ENCODE measurements at regions of chr14 and their contacts with region 1.

Region 1: DNA sequence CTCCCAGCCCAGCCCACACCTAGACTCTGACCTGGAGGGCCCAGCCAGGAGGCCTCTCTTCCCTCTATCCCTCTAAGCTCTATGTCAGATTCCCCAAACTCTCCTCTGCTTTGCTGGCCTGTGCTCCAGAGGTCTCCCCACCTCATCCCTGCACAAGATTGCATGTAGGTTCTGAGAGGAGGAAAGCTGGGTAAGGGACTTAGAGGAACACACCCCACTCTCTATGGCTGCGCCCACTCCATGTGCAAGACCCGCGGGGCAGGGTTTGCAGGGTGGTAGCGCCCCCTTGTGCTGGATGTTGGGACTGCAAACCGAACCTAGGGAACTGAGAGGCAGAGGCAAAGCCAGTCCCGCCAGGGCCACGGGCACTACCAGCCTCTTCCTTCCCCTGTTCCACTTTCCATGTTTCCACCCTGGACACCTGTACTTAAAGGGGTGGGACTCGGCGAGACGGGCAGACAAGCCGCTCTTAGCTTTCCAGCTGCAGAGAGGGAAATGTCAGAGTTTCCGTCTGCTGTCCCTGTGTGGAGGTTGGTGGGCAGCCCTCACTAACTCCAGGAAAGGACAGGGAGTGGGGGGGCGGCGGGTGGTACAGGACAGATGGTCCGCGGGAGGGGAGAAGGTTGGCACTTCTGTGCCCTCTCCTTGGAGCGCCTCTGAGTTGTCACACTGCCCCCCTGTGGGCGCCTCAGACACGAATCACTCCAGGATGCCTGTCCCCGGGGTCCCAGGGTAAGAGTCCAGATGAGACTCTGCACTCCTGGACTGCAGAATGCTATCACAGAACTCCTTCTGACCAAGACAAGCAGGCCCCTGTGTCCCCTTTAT is 16.8 kb downstream of the MMP14 start:
- DNase-seq: peak; percentile 93
- H3K4me3 ChIP-seq: peak overlapping the region; percentile 43
- H3K27ac ChIP-seq: peak overlapping the region; percentile 72
- H3K4me1 ChIP-seq: peaks cover 18% of the 10 kb centered on the region
- H3K27me3 ChIP-seq: no peaks in the 10 kb centered on the region
- CTCF ChIP-seq: peak; percentile 92

Region 2: GRCh38 chr14:22303589-22304195 is 549.5 kb before region 1 on chr14:
- CTCF ChIA-PET with region 1: no interaction called
- POLR2A ChIA-PET with region 1: no interaction called
- intact Hi-C with region 1: loop called (anchors 10 kb)
- DNase-seq: peak; percentile 63
- H3K4me3 ChIP-seq: peak overlapping the region; percentile 15
- H3K27ac ChIP-seq: peak overlapping the region; percentile 78
- H3K4me1 ChIP-seq: peaks cover 29% of the 10 kb centered on the region
- H3K27me3 ChIP-seq: no peaks in the 10 kb centered on the region
- CTCF ChIP-seq: peak; percentile 74

Region 3: DNA sequence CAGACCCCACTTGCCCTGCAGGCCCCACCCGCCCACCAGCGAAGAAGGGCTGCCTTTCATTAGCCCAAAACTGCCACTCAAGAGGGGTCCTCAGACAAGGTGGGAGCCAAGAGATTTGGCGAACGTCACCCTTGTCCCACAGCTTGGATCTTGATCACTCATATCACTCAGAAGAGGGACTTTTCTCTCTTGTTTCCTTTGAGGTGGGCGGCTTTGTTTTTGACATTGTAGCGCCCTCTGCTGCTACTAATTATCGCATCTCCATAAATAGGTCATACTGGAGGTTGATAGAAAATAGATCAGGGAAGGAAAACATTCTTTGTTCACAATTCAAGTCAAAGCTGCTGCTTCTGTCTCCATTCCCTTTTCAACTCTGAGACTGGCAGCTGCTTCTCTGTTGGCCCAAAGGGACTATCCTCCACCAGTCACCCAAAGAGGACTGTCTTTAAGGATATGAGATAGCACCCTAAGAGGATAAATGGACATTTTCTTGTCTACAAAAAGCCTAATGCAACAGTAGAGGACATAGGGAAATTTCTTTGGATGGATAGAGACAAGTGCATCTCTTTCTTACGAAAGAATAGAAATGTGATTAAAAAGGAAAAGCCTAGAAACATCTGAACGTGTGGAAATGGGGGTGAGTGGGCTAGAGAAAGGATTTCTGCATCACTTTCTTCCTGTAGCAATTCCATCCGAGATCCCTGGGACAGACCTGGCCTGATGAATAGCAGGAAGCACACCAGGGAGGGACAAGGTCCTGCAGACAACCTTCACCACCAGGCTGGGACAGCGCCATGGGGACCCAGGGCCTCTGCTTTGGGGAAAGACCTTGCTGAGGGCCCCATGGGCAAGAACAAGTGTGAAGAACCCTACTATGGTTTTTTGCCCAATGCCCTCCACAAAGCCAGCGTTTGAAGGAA is 380.0 kb before region 1 on chr14:
- CTCF ChIA-PET with region 1: no interaction called
- POLR2A ChIA-PET with region 1: no interaction called
- intact Hi-C with region 1: loop called (anchors 10 kb)
- DNase-seq: peak; percentile 89
- H3K4me3 ChIP-seq: no peak overlapping the region
- H3K27ac ChIP-seq: peak overlapping the region; percentile 80
- H3K4me1 ChIP-seq: peaks cover 94% of the 10 kb centered on the region
- H3K27me3 ChIP-seq: no peaks in the 10 kb centered on the region
- CTCF ChIP-seq: peak; percentile 75

Region 4: GRCh38 chr14:22614224-22614799 is 238.8 kb before region 1 on chr14:
- CTCF ChIA-PET with region 1: no interaction called
- POLR2A ChIA-PET with region 1: no interaction called
- intact Hi-C with region 1: no loop called
- DNase-seq: peak; percentile 85
- H3K4me3 ChIP-seq: no peak overlapping the region
- H3K27ac ChIP-seq: peak overlapping the region; percentile 52
- H3K4me1 ChIP-seq: peaks cover 13% of the 10 kb centered on the region
- H3K27me3 ChIP-seq: no peaks in the 10 kb centered on the region
- CTCF ChIP-seq: no peak

Region 5: GRCh38 chr14:22653012-22653621 is 200.0 kb before region 1 on chr14:
- CTCF ChIA-PET with region 1: interaction called, 5 read pairs
- POLR2A ChIA-PET with region 1: interaction called, 3 read pairs
- intact Hi-C with region 1: loop called (anchors 1 kb)
- DNase-seq: peak; percentile 80
- H3K4me3 ChIP-seq: no peak overlapping the region
- H3K27ac ChIP-seq: no peak overlapping the region
- H3K4me1 ChIP-seq: peaks cover 14% of the 10 kb centered on the region
- H3K27me3 ChIP-seq: no peaks in the 10 kb centered on the region
- CTCF ChIP-seq: peak; percentile 89

Region 6: GRCh38 chr14:22822571-22823098 is 30.5 kb before region 1 on chr14:
- CTCF ChIA-PET with region 1: interaction called, 38 read pairs
- POLR2A ChIA-PET with region 1: no interaction called
- intact Hi-C with region 1: loop called (anchors 1 kb)
- DNase-seq: peak; percentile 93
- H3K4me3 ChIP-seq: peak overlapping the region; percentile 29
- H3K27ac ChIP-seq: peak overlapping the region; percentile 8
- H3K4me1 ChIP-seq: peaks cover 25% of the 10 kb centered on the region
- H3K27me3 ChIP-seq: no peaks in the 10 kb centered on the region
- CTCF ChIP-seq: peak; percentile 93

Measured in A673 (cell line).